Posterior vena cava (tissue), 2 donors: ENCODE measurements at regions of chr22 and their contacts with region 1.

Region 1: GRCh38 chr22:29323641-29324040 is 8.1 kb upstream of the RASL10A start:
- DNase-seq: no peak

Region 2: DNA sequence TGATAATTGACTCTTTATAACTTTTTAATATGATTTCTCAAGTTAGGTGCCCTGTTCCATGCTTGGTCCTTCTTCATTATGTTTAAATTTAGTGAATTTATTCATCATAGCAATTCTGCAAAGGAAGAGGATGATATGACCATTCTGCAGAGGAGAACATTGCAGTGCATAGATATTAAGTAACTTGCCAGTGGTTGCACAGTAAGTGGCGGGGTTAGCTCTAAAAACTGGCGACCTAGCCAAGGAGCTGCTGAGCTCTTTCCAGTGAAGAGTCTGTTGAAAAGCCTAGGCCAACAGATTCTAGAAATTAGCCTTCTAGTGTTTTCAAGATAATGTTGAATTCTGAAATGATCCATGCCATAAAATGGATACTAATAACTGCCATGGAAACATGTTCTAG is 51.0 kb before region 1 on chr22:
- intact Hi-C with region 1: loop called in 1 of 2 experiments (anchors 2 kb)
- DNase-seq: no peak

Region 3: GRCh38 chr22:29359469-29359868 is 35.8 kb after region 1 on chr22:
- intact Hi-C with region 1: no loop called
- DNase-seq: no peak